ENCODE measurements at regions of chr5 and their contacts with region 1.

Region 1: GRCh38 chr5:135191084-135191826 is 157.2 kb upstream of the PITX1 start:
- DNase-seq: peak; percentile 44 to 77 (median 68)
- ATAC-seq: peak; percentile 95
- H3K4me3 ChIP-seq: peak overlapping the region; percentile 44
- H3K4me3 Mint-ChIP-seq: peak overlapping the region; percentile 75 to 89 (median 80)
- H3K27ac ChIP-seq: no peak overlapping the region
- H3K27ac Mint-ChIP-seq: no peak overlapping the region
- H3K4me1 ChIP-seq: peaks cover 0 to 7% of the 10 kb centered on the region in 2 donors
- H3K4me1 Mint-ChIP-seq: peaks cover 0 to 8% (median 2%) of the 10 kb centered on the region in 7 donors
- H3K27me3 ChIP-seq: no peaks in the 10 kb centered on the region
- H3K27me3 Mint-ChIP-seq: peaks cover 19 to 76% (median 25%) of the 10 kb centered on the region in 5 donors

Region 2: GRCh38 chr5:134784241-134784920 is 406.9 kb before region 1 on chr5:
- CTCF ChIA-PET with region 1: no interaction called
- POLR2A ChIA-PET with region 1: no interaction called
- intact Hi-C with region 1: loop called in 1 of 2 experiments (anchors 5 kb)
- DNase-seq: peak in 5 of 9 donors; percentile 1 to 28 (median 21)
- ATAC-seq: no peak
- H3K4me3 ChIP-seq: no peak overlapping the region
- H3K4me3 Mint-ChIP-seq: no peak overlapping the region
- H3K27ac ChIP-seq: no peak overlapping the region
- H3K27ac Mint-ChIP-seq: peak overlapping the region in 4 of 9 donors; percentile 14 to 31 (median 24)
- H3K4me1 ChIP-seq: no peaks in the 10 kb centered on the region
- H3K4me1 Mint-ChIP-seq: peaks cover 0 to 3% (median 0%) of the 10 kb centered on the region in 7 donors
- H3K27me3 ChIP-seq: no peaks in the 10 kb centered on the region
- H3K27me3 Mint-ChIP-seq: no peaks in the 10 kb centered on the region

Region 3: DNA sequence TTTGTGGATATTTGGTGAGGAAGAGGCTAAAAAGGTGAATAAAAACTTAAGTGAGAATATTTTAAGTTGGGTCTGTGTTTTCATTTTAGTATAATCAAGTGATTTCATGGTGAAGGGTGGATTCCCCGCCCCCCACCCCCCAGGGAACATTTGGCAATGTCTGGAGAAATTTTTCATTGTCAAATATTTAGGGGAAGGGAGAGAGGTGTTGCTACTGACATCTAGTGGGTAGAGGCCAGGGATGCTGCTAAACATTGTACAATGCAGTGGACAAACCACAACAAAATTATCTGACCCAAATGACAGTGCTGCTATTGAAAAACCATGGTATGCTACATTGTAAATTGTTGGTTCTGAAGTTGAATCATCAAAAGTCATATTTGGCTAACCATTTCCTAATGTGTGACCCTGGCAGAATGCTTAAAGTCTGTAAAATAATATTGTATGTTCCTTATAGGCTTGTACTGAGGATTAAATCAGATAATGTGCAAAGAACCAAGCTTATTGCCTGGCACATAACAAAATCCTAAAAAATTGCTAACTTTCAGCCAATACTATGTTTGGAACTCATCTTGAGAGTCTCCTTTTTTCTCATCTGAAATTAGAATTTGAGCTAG is 339.8 kb before region 1 on chr5:
- CTCF ChIA-PET with region 1: no interaction called
- POLR2A ChIA-PET with region 1: no interaction called
- intact Hi-C with region 1: loop called in 1 of 2 experiments (anchors 10 kb)
- DNase-seq: no peak
- ATAC-seq: peak; percentile 52
- H3K4me3 ChIP-seq: no peak overlapping the region
- H3K4me3 Mint-ChIP-seq: peak overlapping the region in 1 of 10 donors; percentile 39
- H3K27ac ChIP-seq: no peak overlapping the region
- H3K27ac Mint-ChIP-seq: peak overlapping the region in 4 of 9 donors; percentile 14 to 51 (median 32)
- H3K4me1 ChIP-seq: peaks cover 11 to 14% of the 10 kb centered on the region in 2 donors
- H3K4me1 Mint-ChIP-seq: peaks cover 12 to 68% (median 51%) of the 10 kb centered on the region in 7 donors
- H3K27me3 ChIP-seq: no peaks in the 10 kb centered on the region
- H3K27me3 Mint-ChIP-seq: no peaks in the 10 kb centered on the region

Region 4: GRCh38 chr5:134917070-134917815 is 274.0 kb before region 1 on chr5:
- CTCF ChIA-PET with region 1: interaction called, 6 read pairs
- POLR2A ChIA-PET with region 1: no interaction called
- intact Hi-C with region 1: loop called in 1 of 2 experiments (anchors 1 kb)
- DNase-seq: no peak
- ATAC-seq: no peak
- H3K4me3 ChIP-seq: no peak overlapping the region
- H3K4me3 Mint-ChIP-seq: no peak overlapping the region
- H3K27ac ChIP-seq: no peak overlapping the region
- H3K27ac Mint-ChIP-seq: peak overlapping the region in 1 of 9 donors; percentile 9
- H3K4me1 ChIP-seq: no peaks in the 10 kb centered on the region
- H3K4me1 Mint-ChIP-seq: peaks cover 6 to 26% (median 10%) of the 10 kb centered on the region in 7 donors
- H3K27me3 ChIP-seq: no peaks in the 10 kb centered on the region
- H3K27me3 Mint-ChIP-seq: no peaks in the 10 kb centered on the region

Region 5: DNA sequence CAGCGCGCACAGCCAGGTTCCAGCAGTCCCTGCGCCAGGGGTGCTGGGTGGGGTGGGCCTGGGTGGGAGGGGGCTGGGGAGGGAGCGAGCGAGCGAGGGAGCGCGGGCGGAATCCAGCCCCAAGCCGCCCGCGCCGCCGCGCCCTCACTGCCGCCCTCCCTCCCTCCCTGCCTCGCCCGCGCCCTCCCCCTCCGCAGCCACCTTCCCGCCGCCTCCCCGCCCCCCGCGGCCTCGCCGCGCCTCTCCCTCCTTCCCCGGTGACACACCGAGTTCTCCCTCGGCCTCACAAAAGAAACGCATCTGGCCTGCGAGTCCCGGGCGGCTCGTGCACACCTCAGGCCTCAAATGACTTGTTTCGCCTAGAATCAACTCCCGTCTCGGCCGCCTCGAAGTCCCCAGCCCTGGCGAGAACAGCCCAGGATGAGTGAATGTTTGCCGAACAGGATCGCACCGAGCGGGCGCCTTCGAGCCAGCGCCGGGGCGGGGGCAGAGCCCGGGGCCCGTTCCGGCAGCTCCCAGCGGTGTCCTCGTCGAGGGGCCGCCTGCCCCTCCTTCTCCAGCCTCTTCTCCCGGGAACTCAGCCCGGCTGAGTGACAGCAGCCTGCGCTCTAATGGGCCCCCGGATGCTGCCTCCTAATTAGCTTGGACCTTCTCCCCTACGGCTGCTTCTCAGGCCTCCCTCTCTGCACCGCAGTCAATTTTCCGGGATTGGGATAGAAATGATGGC is 156.9 kb before region 1 on chr5:
- CTCF ChIA-PET with region 1: no interaction called
- POLR2A ChIA-PET with region 1: no interaction called
- intact Hi-C with region 1: loop called in 1 of 2 experiments (anchors 2 kb)
- DNase-seq: peak in 1 of 9 donors; percentile 51
- ATAC-seq: no peak
- H3K4me3 ChIP-seq: no peak overlapping the region
- H3K4me3 Mint-ChIP-seq: peak overlapping the region; percentile 68 to 87 (median 79)
- H3K27ac ChIP-seq: no peak overlapping the region
- H3K27ac Mint-ChIP-seq: peak overlapping the region in 1 of 9 donors; percentile 82
- H3K4me1 ChIP-seq: peaks cover 0 to 14% of the 10 kb centered on the region in 2 donors
- H3K4me1 Mint-ChIP-seq: peaks cover 27 to 54% (median 42%) of the 10 kb centered on the region in 7 donors
- H3K27me3 ChIP-seq: peaks cover 0 to 42% of the 10 kb centered on the region in 2 donors
- H3K27me3 Mint-ChIP-seq: peaks cover 74 to 84% (median 77%) of the 10 kb centered on the region in 5 donors

Region 6: DNA sequence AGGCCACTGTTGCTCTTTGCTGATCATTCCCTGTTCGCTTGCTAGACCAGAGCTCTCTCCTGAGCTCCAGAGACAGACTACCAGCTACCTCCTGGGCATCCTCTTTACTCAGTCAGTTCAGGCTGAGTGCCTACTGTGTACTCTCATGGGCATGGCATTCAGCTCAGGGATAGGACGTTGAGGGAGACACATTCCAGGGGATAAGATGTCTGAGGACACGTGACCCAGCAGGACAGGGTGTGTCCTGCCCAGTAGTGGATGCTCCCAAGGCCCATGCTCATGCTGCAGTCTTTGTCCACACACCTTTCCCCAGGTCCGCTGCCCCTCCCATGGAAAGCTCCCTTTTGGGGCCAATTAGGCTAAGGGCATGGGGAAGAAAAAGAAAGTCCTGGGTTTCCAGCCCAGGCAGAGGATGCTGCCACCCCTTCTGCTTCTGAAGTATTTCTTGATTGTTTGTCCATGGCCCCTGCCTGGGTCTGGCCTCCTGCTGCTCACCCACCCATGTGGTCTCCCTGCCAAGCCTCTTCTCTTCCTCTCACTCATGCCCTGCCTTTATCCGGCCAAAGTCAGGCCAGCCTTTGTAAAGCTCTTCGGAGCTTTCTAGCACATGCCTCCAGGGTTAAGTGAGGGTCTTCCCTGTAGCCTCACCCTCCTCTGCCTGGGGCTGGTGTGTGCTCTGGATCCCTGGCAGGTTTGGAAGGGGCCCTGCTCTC is 96.8 kb before region 1 on chr5:
- CTCF ChIA-PET with region 1: no interaction called
- POLR2A ChIA-PET with region 1: no interaction called
- intact Hi-C with region 1: no loop called
- DNase-seq: no peak
- ATAC-seq: no peak
- H3K4me3 ChIP-seq: no peak overlapping the region
- H3K4me3 Mint-ChIP-seq: no peak overlapping the region
- H3K27ac ChIP-seq: no peak overlapping the region
- H3K27ac Mint-ChIP-seq: no peak overlapping the region
- H3K4me1 ChIP-seq: no peaks in the 10 kb centered on the region
- H3K4me1 Mint-ChIP-seq: no peaks in the 10 kb centered on the region
- H3K27me3 ChIP-seq: no peaks in the 10 kb centered on the region
- H3K27me3 Mint-ChIP-seq: peaks cover 6 to 21% (median 13%) of the 10 kb centered on the region in 5 donors

Region 7: GRCh38 chr5:135139381-135140137 is 51.7 kb before region 1 on chr5:
- CTCF ChIA-PET with region 1: no interaction called
- POLR2A ChIA-PET with region 1: no interaction called
- intact Hi-C with region 1: no loop called
- DNase-seq: no peak
- ATAC-seq: peak; percentile 23
- H3K4me3 ChIP-seq: no peak overlapping the region
- H3K4me3 Mint-ChIP-seq: no peak overlapping the region
- H3K27ac ChIP-seq: no peak overlapping the region
- H3K27ac Mint-ChIP-seq: no peak overlapping the region
- H3K4me1 ChIP-seq: no peaks in the 10 kb centered on the region
- H3K4me1 Mint-ChIP-seq: peaks cover 0 to 2% (median 0%) of the 10 kb centered on the region in 7 donors
- H3K27me3 ChIP-seq: no peaks in the 10 kb centered on the region
- H3K27me3 Mint-ChIP-seq: peaks cover 4 to 9% (median 7%) of the 10 kb centered on the region in 5 donors

Region 8: GRCh38 chr5:135271533-135272310 is 80.5 kb after region 1 on chr5:
- CTCF ChIA-PET with region 1: no interaction called
- POLR2A ChIA-PET with region 1: no interaction called
- intact Hi-C with region 1: no loop called
- DNase-seq: no peak
- ATAC-seq: no peak
- H3K4me3 ChIP-seq: no peak overlapping the region
- H3K4me3 Mint-ChIP-seq: no peak overlapping the region
- H3K27ac ChIP-seq: no peak overlapping the region
- H3K27ac Mint-ChIP-seq: no peak overlapping the region
- H3K4me1 ChIP-seq: no peaks in the 10 kb centered on the region
- H3K4me1 Mint-ChIP-seq: no peaks in the 10 kb centered on the region
- H3K27me3 ChIP-seq: no peaks in the 10 kb centered on the region
- H3K27me3 Mint-ChIP-seq: peaks cover 0 to 26% (median 8%) of the 10 kb centered on the region in 5 donors

Region 9: GRCh38 chr5:135332519-135333150 is 141.4 kb after region 1 on chr5:
- CTCF ChIA-PET with region 1: interaction called, 6 read pairs
- POLR2A ChIA-PET with region 1: no interaction called
- intact Hi-C with region 1: loop called (anchors 1 kb)
- DNase-seq: peak in 6 of 9 donors; percentile 14 to 52 (median 46)
- ATAC-seq: no peak
- H3K4me3 ChIP-seq: no peak overlapping the region
- H3K4me3 Mint-ChIP-seq: no peak overlapping the region
- H3K27ac ChIP-seq: no peak overlapping the region
- H3K27ac Mint-ChIP-seq: no peak overlapping the region
- H3K4me1 ChIP-seq: no peaks in the 10 kb centered on the region
- H3K4me1 Mint-ChIP-seq: peaks cover 0 to 27% (median 0%) of the 10 kb centered on the region in 7 donors
- H3K27me3 ChIP-seq: no peaks in the 10 kb centered on the region
- H3K27me3 Mint-ChIP-seq: no peaks in the 10 kb centered on the region